IMR-90 (cell line): ENCODE measurements at regions of chr22 and their contacts with region 1.

Region 1: GRCh38 chr22:33018232-33018864 is 39.8 kb downstream of the SYN3 start:
- DNase-seq: peak; percentile 29
- ATAC-seq: peak; percentile 95
- H3K4me3 ChIP-seq: no peak overlapping the region
- H3K27ac ChIP-seq: no peak overlapping the region
- H3K4me1 ChIP-seq: no peaks in the 10 kb centered on the region
- H3K27me3 ChIP-seq: no peaks in the 10 kb centered on the region
- CTCF ChIP-seq: peak; percentile 73
- POLR2A ChIP-seq: no peak
- RAD21 ChIP-seq: peak; percentile 62

Region 2: DNA sequence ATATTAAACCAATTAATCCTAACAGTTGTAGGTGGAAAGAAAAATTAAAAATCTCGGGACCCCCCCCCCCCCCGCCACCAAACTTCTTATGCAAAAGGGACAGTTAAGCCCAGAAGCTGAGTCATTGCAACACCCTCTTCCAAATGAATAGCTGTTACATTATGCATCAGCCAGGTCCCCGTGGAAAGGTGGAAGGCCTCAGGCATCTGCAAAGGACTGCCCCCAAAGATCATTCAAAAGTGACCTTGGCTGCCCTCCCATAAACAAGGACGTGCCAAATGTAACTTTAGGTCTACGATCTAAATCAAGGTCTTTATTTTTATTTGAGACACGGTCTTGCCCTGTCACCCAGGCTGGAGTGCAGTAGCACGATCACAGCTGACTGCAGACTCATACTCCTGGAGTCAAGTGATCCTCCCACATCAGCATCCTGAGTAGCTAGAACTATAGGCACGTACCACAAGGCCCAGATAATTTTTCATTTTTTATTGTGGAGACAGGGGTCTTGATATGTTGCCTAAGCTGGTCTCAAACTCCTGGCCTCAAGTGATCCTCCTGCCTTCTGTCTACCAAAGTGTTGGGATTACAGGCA is 17.0 kb after region 1 on chr22:
- CTCF ChIA-PET with region 1: interaction called, 10 read pairs
- POLR2A ChIA-PET with region 1: no interaction called
- dilution Hi-C with region 1: no loop called
- in situ Hi-C with region 1: no loop called
- intact Hi-C with region 1: no loop called
- DNase-seq: no peak
- ATAC-seq: no peak
- H3K4me3 ChIP-seq: no peak overlapping the region
- H3K27ac ChIP-seq: no peak overlapping the region
- H3K4me1 ChIP-seq: no peaks in the 10 kb centered on the region
- H3K27me3 ChIP-seq: peaks cover 9% of the 10 kb centered on the region
- CTCF ChIP-seq: no peak
- POLR2A ChIP-seq: no peak
- RAD21 ChIP-seq: no peak

Region 3: DNA sequence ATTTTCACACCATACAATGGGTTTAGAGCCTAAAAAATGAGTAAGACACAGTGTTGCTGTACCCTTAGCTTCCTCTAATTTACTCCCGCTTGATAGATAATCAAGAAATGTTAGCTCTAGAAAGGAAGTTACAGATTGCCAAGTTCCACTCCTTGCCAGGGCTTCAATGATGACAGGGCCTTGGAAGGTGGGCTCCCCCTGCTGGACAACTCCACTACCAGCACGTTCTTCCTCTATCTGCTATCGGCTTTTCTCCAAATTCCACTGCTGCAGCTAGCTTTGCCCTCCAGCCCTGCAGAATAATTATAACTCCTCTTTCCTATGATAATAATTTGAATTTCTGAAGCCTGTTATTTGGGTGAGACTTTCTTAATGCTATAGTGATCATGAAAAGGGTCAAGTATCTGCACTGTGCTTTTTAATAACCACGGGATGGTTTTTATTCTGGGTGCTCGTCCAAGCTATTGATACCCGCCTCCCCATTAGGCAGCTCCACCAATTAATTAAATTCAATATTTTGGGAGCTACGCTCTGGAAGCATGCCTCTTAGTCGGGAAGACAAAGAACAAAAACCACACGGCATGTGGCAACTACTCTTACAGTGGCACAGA is 30.9 kb after region 1 on chr22:
- CTCF ChIA-PET with region 1: interaction called, 11 read pairs
- POLR2A ChIA-PET with region 1: no interaction called
- dilution Hi-C with region 1: no loop called
- in situ Hi-C with region 1: no loop called
- intact Hi-C with region 1: loop called (anchors 1 kb)
- DNase-seq: peak; percentile 67
- ATAC-seq: peak; percentile 95
- H3K4me3 ChIP-seq: no peak overlapping the region
- H3K27ac ChIP-seq: no peak overlapping the region
- H3K4me1 ChIP-seq: no peaks in the 10 kb centered on the region
- H3K27me3 ChIP-seq: peaks cover 3% of the 10 kb centered on the region; the same call in 1 of the 2 replicates
- CTCF ChIP-seq: peak; percentile 78
- POLR2A ChIP-seq: no peak
- RAD21 ChIP-seq: peak; percentile 52

Region 4: DNA sequence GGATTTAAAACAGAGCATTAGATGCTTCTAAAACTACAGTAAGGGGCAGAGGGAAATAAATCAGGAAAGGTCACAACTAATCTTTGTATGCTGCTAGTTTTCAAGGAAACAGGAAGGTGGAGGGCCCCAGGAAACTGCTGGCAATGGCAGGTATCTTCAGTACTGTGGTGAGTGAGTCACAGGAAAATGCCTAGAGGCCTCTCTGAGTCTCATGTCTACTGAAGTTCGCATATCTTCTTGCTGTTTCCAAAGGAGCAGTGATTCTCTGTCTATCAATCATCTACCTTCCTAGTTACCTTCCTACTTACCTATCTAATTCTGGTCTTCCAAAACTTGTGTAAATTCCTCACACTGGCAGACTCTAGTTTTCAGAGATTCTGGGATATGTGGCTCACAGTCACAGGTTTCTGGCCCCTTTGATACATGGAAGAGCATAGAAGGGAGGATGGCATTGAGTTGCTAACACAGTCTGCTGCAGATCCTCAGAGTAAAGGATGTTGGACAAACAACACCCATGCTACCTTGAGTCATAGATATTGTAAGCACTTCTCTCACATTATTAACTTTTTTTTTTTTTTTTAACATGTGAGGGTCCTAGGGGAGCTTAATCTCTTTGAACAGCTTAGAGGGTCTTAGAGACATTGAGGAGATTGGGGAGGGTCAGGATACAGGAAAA is 98.7 kb after region 1 on chr22:
- CTCF ChIA-PET with region 1: no interaction called
- POLR2A ChIA-PET with region 1: no interaction called
- dilution Hi-C with region 1: no loop called
- in situ Hi-C with region 1: no loop called
- intact Hi-C with region 1: no loop called
- DNase-seq: no peak
- ATAC-seq: no peak
- H3K4me3 ChIP-seq: no peak overlapping the region
- H3K27ac ChIP-seq: no peak overlapping the region
- H3K4me1 ChIP-seq: no peaks in the 10 kb centered on the region
- H3K27me3 ChIP-seq: no peaks in the 10 kb centered on the region
- CTCF ChIP-seq: no peak
- POLR2A ChIP-seq: no peak
- RAD21 ChIP-seq: no peak

Region 5: DNA sequence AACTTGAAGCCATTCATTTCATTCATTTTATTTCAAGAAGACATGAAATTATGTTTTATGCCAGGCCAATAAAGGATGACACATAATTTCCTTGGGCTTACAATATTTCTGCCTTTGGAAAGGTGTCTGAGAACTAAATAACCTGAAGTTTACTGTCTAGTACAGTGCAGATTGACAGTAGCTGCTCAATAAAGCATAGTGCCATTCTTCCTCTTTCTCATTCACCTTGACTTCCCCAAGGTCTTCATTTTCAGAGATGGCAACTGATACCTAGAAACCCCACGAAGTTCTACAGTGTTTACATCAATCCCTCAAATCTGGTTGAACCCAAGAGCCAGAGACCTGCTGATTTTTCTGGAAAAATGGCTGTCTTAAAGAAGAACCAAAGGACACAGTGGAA is 184.1 kb after region 1 on chr22:
- CTCF ChIA-PET with region 1: interaction called, 4 read pairs
- POLR2A ChIA-PET with region 1: no interaction called
- dilution Hi-C with region 1: no loop called
- in situ Hi-C with region 1: no loop called
- intact Hi-C with region 1: loop called (anchors 1 kb)
- DNase-seq: no peak
- ATAC-seq: no peak
- H3K4me3 ChIP-seq: no peak overlapping the region
- H3K27ac ChIP-seq: no peak overlapping the region
- H3K4me1 ChIP-seq: no peaks in the 10 kb centered on the region
- H3K27me3 ChIP-seq: no peaks in the 10 kb centered on the region
- CTCF ChIP-seq: no peak
- POLR2A ChIP-seq: no peak
- RAD21 ChIP-seq: no peak

Region 6: GRCh38 chr22:33209930-33210784 is 191.8 kb after region 1 on chr22:
- CTCF ChIA-PET with region 1: no interaction called
- POLR2A ChIA-PET with region 1: no interaction called
- dilution Hi-C with region 1: no loop called
- in situ Hi-C with region 1: no loop called
- intact Hi-C with region 1: loop called (anchors 1 kb)
- DNase-seq: peak; percentile 9
- ATAC-seq: peak; percentile 83
- H3K4me3 ChIP-seq: no peak overlapping the region
- H3K27ac ChIP-seq: no peak overlapping the region
- H3K4me1 ChIP-seq: no peaks in the 10 kb centered on the region
- H3K27me3 ChIP-seq: no peaks in the 10 kb centered on the region; the same call in 1 of the 2 replicates
- CTCF ChIP-seq: peak; percentile 48
- POLR2A ChIP-seq: no peak
- RAD21 ChIP-seq: peak; percentile 50